Posterior vena cava (tissue), 2 donors: ENCODE measurements at regions of chr4 and their contacts with region 1.

Region 1: DNA sequence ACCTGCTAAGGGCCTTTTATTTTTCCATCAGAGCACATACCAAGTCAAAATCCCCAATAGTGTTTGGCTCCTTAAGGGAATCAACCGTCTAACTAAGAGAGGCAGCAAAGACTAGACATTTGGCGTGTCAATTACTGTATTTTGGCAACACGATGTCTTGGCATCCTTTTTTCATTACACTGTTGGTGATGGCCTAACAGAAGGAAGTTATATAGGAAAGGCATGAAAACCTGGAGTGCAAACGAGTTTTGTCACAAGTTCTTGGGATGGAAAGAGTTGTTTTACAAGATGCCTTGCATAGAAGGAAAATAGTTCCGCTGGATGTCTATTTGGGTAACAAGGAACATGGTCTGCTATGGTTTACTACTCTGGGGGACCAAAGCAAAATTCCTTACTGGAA is 119.2 kb upstream of the TTC29 start:
- DNase-seq: no peak

Region 2: DNA sequence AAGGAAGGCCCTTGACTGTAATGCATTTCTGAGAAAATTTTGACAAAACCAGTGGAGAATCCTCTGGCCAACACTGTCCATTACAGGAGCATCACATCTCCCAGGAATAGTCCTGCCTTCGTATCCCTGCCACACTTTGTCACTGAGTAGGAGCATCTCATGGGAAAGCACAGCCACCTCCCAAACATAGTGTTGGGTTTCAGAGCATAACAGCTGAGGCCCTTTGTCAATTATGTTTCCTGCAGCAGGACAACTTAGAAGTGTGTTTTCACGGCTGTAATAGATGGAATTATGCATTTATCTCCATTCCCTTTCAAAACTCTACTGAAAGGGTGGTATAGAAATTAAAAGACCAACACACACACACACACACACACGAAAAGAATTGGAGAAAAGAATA is 1674.3 kb before region 1 on chr4:
- intact Hi-C with region 1: loop called in 1 of 2 experiments (anchors 5 kb)
- DNase-seq: no peak

Region 3: DNA sequence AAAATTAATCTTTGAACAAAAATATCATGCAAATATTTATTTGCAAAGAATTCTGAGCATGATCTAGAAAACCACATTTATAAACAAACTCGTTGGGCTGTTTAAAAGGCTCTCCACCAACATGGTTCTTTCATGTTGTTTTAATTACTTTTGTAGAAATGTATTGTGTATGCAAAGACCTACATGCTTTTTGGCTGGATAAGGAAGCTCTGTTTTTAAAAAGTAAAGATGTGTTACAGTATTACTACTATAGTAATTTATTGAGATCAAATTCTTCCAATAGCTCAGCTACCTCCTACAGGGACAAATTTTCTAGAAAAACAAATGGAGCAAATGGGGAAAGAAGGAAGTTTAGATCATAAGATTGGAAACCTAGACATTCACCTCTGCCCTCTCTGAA is 58.3 kb after region 1 on chr4:
- intact Hi-C with region 1: no loop called
- DNase-seq: no peak